ENCODE measurements at regions of chr2 and their contacts with region 1.

Region 1: GRCh38 chr2:20675701-20676352 is 8.9 kb downstream of the GDF7 start:
- DNase-seq: no peak
- ATAC-seq: peak; percentile 62 to 71
- H3K4me3 ChIP-seq: no peak overlapping the region
- H3K27ac ChIP-seq: no peak overlapping the region
- H3K4me1 ChIP-seq: peaks cover 4% of the 10 kb centered on the region
- H3K27me3 ChIP-seq: peaks cover 42% of the 10 kb centered on the region
- CTCF ChIP-seq: no peak

Region 2: DNA sequence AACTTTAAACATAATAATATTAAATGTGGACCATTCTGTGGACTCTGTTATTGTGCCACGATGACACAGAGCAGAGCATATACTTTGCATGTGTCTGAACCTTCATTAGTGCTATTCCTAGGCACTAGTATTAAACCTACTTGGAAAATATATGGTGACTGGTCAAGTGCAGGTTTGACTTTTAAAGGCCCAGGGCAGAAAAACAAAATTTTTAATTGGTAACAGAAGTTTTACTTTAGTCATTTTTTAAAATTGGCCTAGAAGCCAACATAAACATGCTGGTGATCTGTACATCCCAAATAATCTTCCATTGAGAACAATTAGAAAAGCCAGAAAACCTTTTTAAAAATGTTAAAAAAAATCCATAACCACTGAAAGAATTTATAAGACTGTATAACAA is 130.5 kb after region 1 on chr2:
- intact Hi-C with region 1: no loop called
- DNase-seq: no peak
- ATAC-seq: no peak
- H3K4me3 ChIP-seq: no peak overlapping the region
- H3K27ac ChIP-seq: no peak overlapping the region
- H3K4me1 ChIP-seq: no peaks in the 10 kb centered on the region
- H3K27me3 ChIP-seq: no peaks in the 10 kb centered on the region
- CTCF ChIP-seq: no peak

Region 3: DNA sequence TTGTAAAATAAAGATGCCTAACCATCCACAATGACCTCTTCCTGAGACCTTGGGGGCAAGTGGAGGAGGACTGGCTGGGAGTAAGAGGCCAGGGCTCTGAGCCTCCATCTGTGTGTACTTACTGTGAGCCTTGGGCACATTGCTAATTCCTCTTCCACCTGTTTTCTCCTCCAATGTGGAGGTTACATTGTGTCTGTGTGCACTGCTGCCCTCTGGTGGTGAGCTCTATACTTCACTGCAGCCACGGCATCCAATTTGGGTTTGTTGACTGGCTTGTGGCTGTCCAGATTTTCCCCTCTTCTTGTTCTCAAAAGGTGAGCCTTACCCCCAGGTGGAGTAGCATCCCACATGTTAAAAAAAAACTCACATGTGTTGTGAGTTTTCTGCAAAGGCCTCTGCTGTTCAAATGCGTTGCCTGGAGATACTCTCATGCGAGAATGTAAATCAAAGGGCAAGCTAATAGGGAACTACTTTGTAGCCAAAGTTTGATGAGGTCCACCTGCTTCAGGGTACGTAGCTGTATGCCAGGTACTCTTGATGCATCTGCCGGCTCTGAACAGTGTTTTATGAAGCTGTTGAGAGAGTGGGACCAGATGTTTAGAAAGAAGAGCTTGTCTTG is 287.2 kb after region 1 on chr2:
- intact Hi-C with region 1: loop called (anchors 10 kb)
- DNase-seq: peak; percentile 67
- ATAC-seq: peak; percentile 79 to 85
- H3K4me3 ChIP-seq: no peak overlapping the region
- H3K27ac ChIP-seq: no peak overlapping the region
- H3K4me1 ChIP-seq: no peaks in the 10 kb centered on the region
- H3K27me3 ChIP-seq: peaks cover 7% of the 10 kb centered on the region
- CTCF ChIP-seq: peak; percentile 86

Measured in lower lobe of right lung (tissue), 2 donors.